OCI-LY7 (cell line): ENCODE measurements at regions of chr10 and their contacts with region 1.

Region 1: GRCh38 chr10:70758757-70759514 is 26.2 kb downstream of the TBATA start:
- DNase-seq: peak; percentile 78
- H3K4me3 ChIP-seq: no peak overlapping the region
- H3K27ac ChIP-seq: no peak overlapping the region
- H3K4me1 ChIP-seq: peaks cover 9% of the 10 kb centered on the region
- CTCF ChIP-seq: peak; percentile 87

Region 2: DNA sequence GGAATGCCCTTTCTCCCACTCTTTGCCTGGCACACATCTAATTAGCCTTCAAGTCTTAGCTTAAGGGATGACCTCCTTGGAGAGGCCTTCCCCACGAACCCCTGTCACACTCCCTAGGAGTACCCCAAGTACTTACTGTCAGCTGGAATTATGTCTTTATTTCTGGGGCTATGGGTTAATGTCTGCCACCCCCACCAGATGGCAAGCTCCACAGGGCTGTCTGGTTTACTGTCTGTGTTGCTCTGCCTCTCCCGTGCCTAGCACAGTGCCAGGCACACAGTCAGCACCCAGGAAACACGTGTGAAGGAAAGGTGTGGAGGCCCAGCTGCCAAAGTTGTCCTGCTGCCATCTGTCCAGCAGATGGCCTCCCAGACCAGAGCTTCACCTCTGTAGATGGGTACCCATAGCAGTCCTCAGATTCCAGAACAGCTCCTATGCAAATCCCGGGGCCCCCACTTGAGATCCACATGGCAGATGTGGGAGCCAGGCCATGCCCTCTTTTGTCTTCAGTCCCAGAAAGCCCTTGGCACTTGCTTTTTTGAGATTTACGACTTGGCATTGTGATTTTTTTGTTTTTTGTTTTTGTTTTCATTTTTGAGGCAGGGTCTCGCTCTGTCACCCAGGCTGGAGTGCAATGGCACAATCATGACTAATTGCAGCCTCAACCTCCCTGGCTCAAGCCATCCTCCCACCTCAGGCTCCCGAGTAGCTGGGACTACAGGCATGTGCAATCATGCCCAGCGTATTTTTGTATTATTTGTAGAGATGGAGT is 297.5 kb before region 1 on chr10:
- CTCF ChIA-PET with region 1: no interaction called
- POLR2A ChIA-PET with region 1: no interaction called
- intact Hi-C with region 1: loop called (anchors 1 kb)
- DNase-seq: peak; percentile 74
- H3K4me3 ChIP-seq: no peak overlapping the region
- H3K27ac ChIP-seq: no peak overlapping the region
- H3K4me1 ChIP-seq: no peaks in the 10 kb centered on the region
- CTCF ChIP-seq: peak; percentile 92

Region 3: DNA sequence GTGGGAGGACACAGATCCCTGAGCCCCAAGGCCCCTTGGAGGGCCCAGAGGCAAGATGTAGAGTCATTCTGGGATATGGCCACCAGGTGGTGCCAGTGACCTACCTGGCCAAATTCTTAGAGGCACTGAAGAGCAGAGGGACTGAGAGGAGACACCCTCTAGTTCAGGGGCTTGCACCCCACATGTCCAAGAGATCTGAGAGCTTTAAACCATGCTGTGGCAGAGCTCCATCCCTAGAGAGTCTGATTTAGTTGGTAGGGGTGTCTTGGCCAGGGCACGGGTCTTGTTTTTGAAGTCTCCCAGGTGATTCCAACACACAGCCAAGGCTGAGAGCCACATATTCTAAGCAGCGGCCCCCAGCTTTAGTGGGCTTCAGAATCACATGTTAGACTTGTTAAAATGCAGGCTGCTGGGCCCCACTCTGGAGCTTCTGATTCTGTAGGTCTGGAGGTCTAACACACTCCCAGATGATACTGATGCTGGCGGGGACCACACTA is 208.9 kb before region 1 on chr10:
- CTCF ChIA-PET with region 1: interaction called, 3 read pairs
- POLR2A ChIA-PET with region 1: interaction called, 3 read pairs
- intact Hi-C with region 1: loop called (anchors 1 kb)
- DNase-seq: peak; percentile 75
- H3K4me3 ChIP-seq: no peak overlapping the region
- H3K27ac ChIP-seq: no peak overlapping the region
- H3K4me1 ChIP-seq: peaks cover 4% of the 10 kb centered on the region
- CTCF ChIP-seq: peak; percentile 93

Region 4: GRCh38 chr10:70558871-70559810 is 199.8 kb before region 1 on chr10:
- CTCF ChIA-PET with region 1: no interaction called
- POLR2A ChIA-PET with region 1: interaction called, 4 read pairs
- intact Hi-C with region 1: loop called (anchors 2 kb)
- DNase-seq: peak; percentile 72
- H3K4me3 ChIP-seq: no peak overlapping the region
- H3K27ac ChIP-seq: peak overlapping the region; percentile 73
- H3K4me1 ChIP-seq: peaks cover 74% of the 10 kb centered on the region
- CTCF ChIP-seq: peak; percentile 83

Region 5: DNA sequence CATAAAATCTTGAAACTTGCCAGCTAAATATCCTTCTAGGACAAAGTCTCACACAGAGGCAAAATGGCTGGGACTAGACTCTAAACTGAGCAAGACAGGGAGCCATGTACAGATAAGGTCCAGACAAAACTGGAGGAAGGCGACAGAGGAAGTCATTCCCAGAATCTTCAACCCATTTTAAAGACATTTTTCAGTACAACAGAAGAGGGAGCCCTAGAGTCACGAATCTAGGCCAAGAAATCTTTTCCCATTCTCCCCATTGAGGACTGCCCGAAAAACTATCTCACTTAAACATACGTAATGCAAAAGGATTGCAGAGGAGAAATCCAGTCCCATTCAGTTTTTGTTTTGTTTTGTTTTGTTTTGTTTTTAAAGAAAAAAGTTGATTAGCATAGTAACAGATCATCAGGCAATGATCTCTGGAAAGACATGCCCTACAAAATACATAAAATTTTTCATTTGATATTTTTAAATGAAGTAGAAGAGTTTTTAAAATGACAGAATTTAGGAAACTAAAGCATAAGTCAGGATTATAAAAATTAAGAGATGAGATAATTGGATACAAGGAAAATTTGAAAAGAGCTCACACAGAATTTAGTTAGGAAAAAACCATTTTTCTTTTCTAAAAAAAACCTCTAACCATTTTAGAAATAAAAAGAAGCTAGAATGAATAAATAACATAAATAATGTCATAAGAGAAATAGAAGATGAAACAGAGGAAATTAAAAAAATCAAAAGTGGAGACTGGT is 139.5 kb before region 1 on chr10:
- CTCF ChIA-PET with region 1: no interaction called
- POLR2A ChIA-PET with region 1: no interaction called
- intact Hi-C with region 1: loop called (anchors 10 kb)
- DNase-seq: no peak
- H3K4me3 ChIP-seq: no peak overlapping the region
- H3K27ac ChIP-seq: no peak overlapping the region
- H3K4me1 ChIP-seq: no peaks in the 10 kb centered on the region
- CTCF ChIP-seq: peak; percentile 70

Region 6: DNA sequence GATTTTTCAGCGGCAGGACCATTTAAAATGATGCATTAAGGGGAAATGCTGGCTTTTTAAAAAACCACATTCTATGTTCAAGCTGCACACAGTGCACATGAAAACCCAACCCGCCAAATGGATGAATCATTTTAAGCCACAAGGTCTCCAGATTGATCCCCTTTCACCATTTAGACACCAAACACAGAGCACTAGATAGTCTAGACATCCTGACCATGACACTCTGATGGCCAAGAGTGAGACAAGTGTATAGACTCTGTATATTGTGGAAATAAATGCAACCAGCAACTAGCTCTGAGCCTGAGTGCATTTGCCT is 1063.5 kb after region 1 on chr10:
- CTCF ChIA-PET with region 1: no interaction called
- POLR2A ChIA-PET with region 1: no interaction called
- intact Hi-C with region 1: no loop called
- DNase-seq: no peak
- H3K4me3 ChIP-seq: no peak overlapping the region
- H3K27ac ChIP-seq: no peak overlapping the region
- H3K4me1 ChIP-seq: no peaks in the 10 kb centered on the region
- CTCF ChIP-seq: no peak